K562 (cell line): ENCODE measurements at regions of chrX and their contacts with region 1.

Region 1: DNA sequence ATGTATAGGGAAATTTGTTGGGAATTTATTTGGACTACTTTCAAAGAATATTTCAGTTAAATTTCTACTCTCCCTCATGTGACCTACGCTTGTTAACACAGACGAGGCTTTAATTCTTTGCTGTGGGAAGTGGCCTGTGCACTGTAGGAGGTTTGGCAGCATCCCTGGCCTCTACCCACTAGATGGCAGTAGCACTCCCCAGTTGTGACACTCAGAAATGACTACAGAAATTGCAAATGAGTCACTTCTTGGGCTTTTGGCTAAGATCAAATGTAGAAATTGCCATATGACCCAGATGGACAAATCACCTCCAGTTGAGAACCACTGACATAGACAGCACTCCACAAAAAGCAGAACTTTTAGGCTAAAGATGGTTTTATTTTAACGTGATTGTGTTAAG is 22.1 kb downstream of the PIR start:
- DNase-seq: peak; percentile 38 to 81 (median 40)
- ATAC-seq: peak; percentile 98
- H3K4me3 ChIP-seq: no peak overlapping the region
- H3K27ac ChIP-seq: no peak overlapping the region
- H3K4me1 ChIP-seq: peaks cover 0 to 4% of the 10 kb centered on the region in 2 experiments; a peak in 1 of 5 replicates
- H3K27me3 ChIP-seq: no peaks in the 10 kb centered on the region
- CTCF ChIP-seq: peak; percentile 76 to 82 (median 79)
- EP300 ChIP-seq: no peak
- POLR2A ChIP-seq: no peak
- RAD21 ChIP-seq: peak; percentile 84 to 90

Region 2: DNA sequence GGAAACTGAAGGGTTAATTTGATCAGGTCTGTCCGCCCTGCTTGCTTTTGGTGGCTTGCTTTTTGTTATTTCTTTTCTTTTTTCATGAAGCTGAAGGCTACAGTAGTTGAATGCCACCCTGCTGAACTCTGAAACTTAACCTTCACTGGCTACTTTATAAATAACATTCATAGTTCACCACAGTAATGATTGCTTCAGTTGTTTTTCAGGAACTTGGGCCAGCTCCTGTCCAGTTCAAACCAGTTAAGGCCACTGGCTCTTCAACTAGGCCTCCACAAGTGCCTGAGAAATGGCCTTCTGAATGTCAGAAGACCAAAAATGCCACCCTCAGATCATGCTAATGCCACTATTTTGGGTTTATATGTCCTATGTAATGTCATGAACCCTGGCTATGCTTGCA is 193.4 kb before region 1 on chrX:
- CTCF ChIA-PET with region 1: no interaction called
- POLR2A ChIA-PET with region 1: no interaction called
- in situ Hi-C with region 1: no loop called
- intact Hi-C with region 1: no loop called
- DNase-seq: no peak
- ATAC-seq: no peak
- H3K4me3 ChIP-seq: no peak overlapping the region
- H3K27ac ChIP-seq: no peak overlapping the region
- H3K4me1 ChIP-seq: no peaks in the 10 kb centered on the region
- H3K27me3 ChIP-seq: no peaks in the 10 kb centered on the region
- CTCF ChIP-seq: no peak
- EP300 ChIP-seq: no peak
- POLR2A ChIP-seq: no peak
- RAD21 ChIP-seq: no peak

Region 3: GRCh38 chrX:15335135-15336022 is 135.6 kb before region 1 on chrX and contains the start of gene PIGA:
- CTCF ChIA-PET with region 1: no interaction called
- POLR2A ChIA-PET with region 1: no interaction called
- in situ Hi-C with region 1: loop called (anchors 25 kb)
- intact Hi-C with region 1: no loop called
- DNase-seq: peak; percentile 96 to 97 (median 96)
- ATAC-seq: peak; percentile 100
- H3K4me3 ChIP-seq: peak within 1 kb of the TSS; percentile 84
- H3K27ac ChIP-seq: peak within 1 kb of the TSS; percentile 81
- H3K4me1 ChIP-seq: no peaks in the 10 kb centered on the region; a peak in 2 of 5 replicates
- H3K27me3 ChIP-seq: peaks cover 0 to 3% of the 10 kb centered on the region in 2 experiments; a peak in 2 of 5 replicates
- CTCF ChIP-seq: no peak
- EP300 ChIP-seq: no peak
- POLR2A ChIP-seq: peak; percentile 91
- RAD21 ChIP-seq: no peak
- polyA plus RNA-seq, gene PIGA: 21.6 to 31.2 TPM

Region 4: GRCh38 chrX:15384304-15384703 is 86.7 kb before region 1 on chrX and contains the start of gene VEGFD:
- CTCF ChIA-PET with region 1: interaction called, 33 read pairs
- POLR2A ChIA-PET with region 1: interaction called, 4 read pairs
- in situ Hi-C with region 1: no loop called
- intact Hi-C with region 1: loop called (anchors 2 kb)
- DNase-seq: no peak
- ATAC-seq: no peak
- H3K4me3 ChIP-seq: no peak within 1 kb of the TSS
- H3K27ac ChIP-seq: no peak within 1 kb of the TSS
- H3K4me1 ChIP-seq: no peaks in the 10 kb centered on the region
- H3K27me3 ChIP-seq: no peaks in the 10 kb centered on the region
- CTCF ChIP-seq: no peak
- EP300 ChIP-seq: no peak
- POLR2A ChIP-seq: no peak
- RAD21 ChIP-seq: no peak
- polyA plus RNA-seq, gene VEGFD: not detected

Region 5: DNA sequence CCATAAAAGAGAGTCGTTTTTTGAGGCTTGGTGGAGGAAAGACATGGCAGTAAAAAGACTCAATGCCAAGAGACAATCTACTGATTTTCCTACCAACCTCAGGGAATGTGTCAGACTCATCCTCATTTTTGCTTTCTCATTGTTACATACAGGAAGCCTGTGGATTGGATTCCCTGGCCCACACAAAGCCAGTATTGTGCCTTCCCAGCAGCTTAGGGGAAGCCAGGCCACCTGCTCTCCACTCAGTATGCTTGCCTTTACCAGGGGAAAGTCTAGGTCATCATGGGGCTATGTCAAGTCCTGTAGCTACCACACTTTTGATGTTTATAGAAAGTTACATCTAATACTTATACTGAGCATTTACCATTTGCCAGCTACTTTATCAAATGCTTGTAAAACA is 40.5 kb after region 1 on chrX:
- CTCF ChIA-PET with region 1: no interaction called
- POLR2A ChIA-PET with region 1: no interaction called
- in situ Hi-C with region 1: no loop called
- intact Hi-C with region 1: no loop called
- DNase-seq: no peak
- ATAC-seq: no peak
- H3K4me3 ChIP-seq: no peak overlapping the region
- H3K27ac ChIP-seq: no peak overlapping the region
- H3K4me1 ChIP-seq: peaks cover 0 to 41% of the 10 kb centered on the region in 2 experiments
- H3K27me3 ChIP-seq: no peaks in the 10 kb centered on the region
- CTCF ChIP-seq: no peak
- EP300 ChIP-seq: no peak
- POLR2A ChIP-seq: no peak
- RAD21 ChIP-seq: no peak

Region 6: DNA sequence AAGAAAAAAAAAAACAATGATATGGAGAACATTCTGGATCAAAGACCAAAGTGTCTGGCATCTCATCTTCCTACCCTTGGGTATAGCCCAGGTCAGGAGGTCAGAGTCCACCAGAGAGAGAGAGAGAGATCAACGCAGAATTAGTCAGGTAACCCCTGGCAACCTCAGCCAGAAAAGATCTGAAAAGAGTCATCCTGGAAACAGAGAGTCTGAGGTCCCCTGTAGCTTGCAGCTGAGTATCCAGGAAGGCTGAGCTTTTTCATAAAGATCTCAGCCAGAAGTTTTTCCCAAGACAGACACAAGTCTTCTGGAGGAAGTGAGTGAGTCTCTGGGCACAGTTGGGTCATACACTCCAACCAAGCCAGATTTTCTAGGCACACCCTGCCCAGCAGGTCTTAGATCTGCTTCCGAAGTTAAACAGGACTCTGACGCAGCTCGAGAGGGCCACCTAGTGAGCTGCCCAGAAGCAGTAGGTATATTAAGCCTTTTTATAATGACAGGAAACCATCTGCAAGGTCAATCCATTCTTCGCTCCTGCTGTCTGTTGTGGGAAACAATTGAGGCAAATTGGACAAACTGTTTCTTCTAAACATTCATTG is 94.1 kb after region 1 on chrX:
- CTCF ChIA-PET with region 1: interaction called, 36 read pairs
- POLR2A ChIA-PET with region 1: no interaction called
- in situ Hi-C with region 1: loop called (anchors 5 kb)
- intact Hi-C with region 1: loop called (anchors 1 kb)
- DNase-seq: peak; percentile 23 to 78 (median 34)
- ATAC-seq: peak; percentile 96
- H3K4me3 ChIP-seq: no peak overlapping the region
- H3K27ac ChIP-seq: no peak overlapping the region
- H3K4me1 ChIP-seq: peaks cover 0 to 3% of the 10 kb centered on the region in 2 experiments; a peak in 2 of 5 replicates
- H3K27me3 ChIP-seq: no peaks in the 10 kb centered on the region
- CTCF ChIP-seq: peak; percentile 84 to 89 (median 86)
- EP300 ChIP-seq: no peak
- POLR2A ChIP-seq: no peak
- RAD21 ChIP-seq: peak; percentile 94 to 97

Region 7: GRCh38 chrX:15664487-15665444 is 193.8 kb after region 1 on chrX and contains the start of gene CLTRN:
- CTCF ChIA-PET with region 1: no interaction called
- POLR2A ChIA-PET with region 1: no interaction called
- in situ Hi-C with region 1: loop called (anchors 10 kb)
- intact Hi-C with region 1: no loop called
- DNase-seq: no peak
- ATAC-seq: no peak
- H3K4me3 ChIP-seq: no peak within 1 kb of the TSS
- H3K27ac ChIP-seq: no peak within 1 kb of the TSS
- H3K4me1 ChIP-seq: no peaks in the 10 kb centered on the region
- H3K27me3 ChIP-seq: no peaks in the 10 kb centered on the region; a peak in 2 of 5 replicates
- CTCF ChIP-seq: no peak
- EP300 ChIP-seq: no peak
- POLR2A ChIP-seq: no peak
- RAD21 ChIP-seq: no peak
- polyA plus RNA-seq, gene CLTRN: 0.28 to 0.34 TPM

Region 8: DNA sequence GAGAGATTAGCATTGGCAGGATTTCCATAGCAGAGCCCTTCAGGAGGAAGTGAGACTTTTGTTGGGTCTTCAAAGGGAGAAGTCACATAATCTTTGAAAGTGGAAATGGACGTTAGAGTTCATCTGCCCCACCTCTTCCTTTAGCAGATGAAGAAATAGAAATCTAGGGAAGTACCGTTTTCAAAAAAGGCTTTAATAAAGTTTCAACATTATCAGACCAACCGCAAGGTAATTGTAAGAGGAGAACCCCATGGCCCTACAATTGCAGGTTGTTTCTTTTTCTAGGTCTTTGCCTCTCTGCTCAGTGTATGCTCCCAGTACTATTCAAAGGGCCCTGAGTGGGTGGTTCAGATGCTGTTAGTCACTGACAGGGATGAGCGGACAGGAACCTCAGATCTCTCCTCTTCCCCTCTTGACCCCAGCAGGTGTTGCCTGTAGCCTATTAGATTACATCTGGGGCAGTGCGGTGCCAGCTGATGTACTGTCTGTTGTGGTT is 432.2 kb after region 1 on chrX:
- CTCF ChIA-PET with region 1: no interaction called
- POLR2A ChIA-PET with region 1: no interaction called
- in situ Hi-C with region 1: no loop called
- intact Hi-C with region 1: no loop called
- DNase-seq: no peak
- ATAC-seq: no peak
- H3K4me3 ChIP-seq: no peak overlapping the region
- H3K27ac ChIP-seq: no peak overlapping the region
- H3K4me1 ChIP-seq: no peaks in the 10 kb centered on the region
- H3K27me3 ChIP-seq: no peaks in the 10 kb centered on the region
- CTCF ChIP-seq: no peak
- EP300 ChIP-seq: no peak
- POLR2A ChIP-seq: no peak
- RAD21 ChIP-seq: no peak